Mammary epithelial cell (primary cell): ENCODE measurements at regions of chr1 and their contacts with region 1.

Region 1: DNA sequence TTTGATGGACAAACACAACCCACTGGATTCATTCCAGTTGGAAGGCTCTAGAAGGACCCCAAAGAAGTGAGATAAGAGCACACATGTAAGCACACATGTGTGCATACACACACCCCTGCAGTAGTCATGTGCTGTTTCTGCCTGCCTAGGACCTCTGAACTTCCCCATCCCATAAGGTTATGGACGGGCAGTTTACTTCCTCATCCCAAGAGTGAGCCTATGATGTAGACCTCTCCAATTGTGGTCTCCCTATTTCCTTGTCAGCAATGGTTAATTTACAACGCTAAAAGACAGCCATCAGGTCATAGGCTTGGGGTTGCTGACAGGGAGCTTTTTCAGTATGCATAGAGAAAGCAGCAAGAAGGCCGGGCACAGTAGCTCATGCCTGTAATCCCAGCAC is 15.4 kb upstream of the ADAR start:
- DNase-seq: no peak
- H3K4me3 ChIP-seq: no peak overlapping the region
- H3K27ac ChIP-seq: no peak overlapping the region
- H3K4me1 ChIP-seq: peaks cover 17% of the 10 kb centered on the region
- H3K27me3 ChIP-seq: no peaks in the 10 kb centered on the region
- CTCF ChIP-seq: no peak

Region 2: GRCh38 chr1:154567386-154568156 is 55.8 kb before region 1 on chr1 and contains the start of gene CHRNB2:
- CTCF ChIA-PET with region 1: no interaction called
- dilution Hi-C with region 1: no loop called
- in situ Hi-C with region 1: no loop called
- intact Hi-C with region 1: no loop called
- DNase-seq: peak; percentile 56
- H3K4me3 ChIP-seq: peak within 1 kb of the TSS in 2 of 3 experiments; percentile 16 to 37
- H3K27ac ChIP-seq: no peak within 1 kb of the TSS
- H3K4me1 ChIP-seq: peaks cover 3% of the 10 kb centered on the region
- H3K27me3 ChIP-seq: no peaks in the 10 kb centered on the region
- CTCF ChIP-seq: no peak
- total RNA-seq, gene CHRNB2: 0.17 to 0.19 TPM

Region 3: GRCh38 chr1:154607609-154608396 is 15.6 kb before region 1 on chr1 and contains the start of gene ADAR:
- CTCF ChIA-PET with region 1: no interaction called
- dilution Hi-C with region 1: no loop called
- in situ Hi-C with region 1: no loop called
- intact Hi-C with region 1: loop called (anchors 2 kb)
- DNase-seq: peak; percentile 96
- H3K4me3 ChIP-seq: peak within 1 kb of the TSS; percentile 58 to 68 (median 68)
- H3K27ac ChIP-seq: peak within 1 kb of the TSS; percentile 80
- H3K4me1 ChIP-seq: peaks cover 17% of the 10 kb centered on the region
- H3K27me3 ChIP-seq: no peaks in the 10 kb centered on the region
- CTCF ChIP-seq: no peak
- total RNA-seq, gene ADAR: 89.7 to 125 TPM

Region 4: GRCh38 chr1:154663471-154664060 is 40.2 kb after region 1 on chr1:
- CTCF ChIA-PET with region 1: no interaction called
- dilution Hi-C with region 1: no loop called
- in situ Hi-C with region 1: no loop called
- intact Hi-C with region 1: no loop called
- DNase-seq: no peak
- H3K4me3 ChIP-seq: no peak overlapping the region
- H3K27ac ChIP-seq: no peak overlapping the region
- H3K4me1 ChIP-seq: no peaks in the 10 kb centered on the region
- H3K27me3 ChIP-seq: peaks cover 3% of the 10 kb centered on the region
- CTCF ChIP-seq: no peak